GM10248 (cell line): ENCODE measurements at regions of chr11 and their contacts with region 1.

Region 1: GRCh38 chr11:120248551-120249278 is 8.8 kb downstream of the POU2F3 start:
- DNase-seq: no peak
- CTCF ChIP-seq: no peak

Region 2: DNA sequence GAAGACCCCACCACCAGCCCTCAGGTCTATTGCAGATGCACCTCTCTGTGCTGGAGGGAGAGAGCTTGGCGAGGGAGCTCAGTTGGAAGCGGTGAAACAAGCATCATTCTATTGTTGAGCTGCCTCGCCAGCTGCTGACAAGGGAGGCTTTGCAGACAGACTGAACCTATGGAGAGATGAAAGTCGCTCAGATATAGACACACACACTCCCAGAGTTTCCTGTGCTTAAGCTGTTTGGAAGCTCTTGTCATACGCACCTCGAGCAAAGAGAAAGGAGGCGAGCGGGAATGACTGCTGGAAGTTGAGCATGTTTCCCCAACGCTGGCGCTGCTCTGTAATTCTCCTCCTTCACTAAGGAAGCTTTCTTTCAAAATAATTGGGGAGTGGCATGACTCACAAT is 236.9 kb before region 1 on chr11:
- CTCF ChIA-PET with region 1: no interaction called
- POLR2A ChIA-PET with region 1: no interaction called
- DNase-seq: no peak
- CTCF ChIP-seq: no peak

Region 3: DNA sequence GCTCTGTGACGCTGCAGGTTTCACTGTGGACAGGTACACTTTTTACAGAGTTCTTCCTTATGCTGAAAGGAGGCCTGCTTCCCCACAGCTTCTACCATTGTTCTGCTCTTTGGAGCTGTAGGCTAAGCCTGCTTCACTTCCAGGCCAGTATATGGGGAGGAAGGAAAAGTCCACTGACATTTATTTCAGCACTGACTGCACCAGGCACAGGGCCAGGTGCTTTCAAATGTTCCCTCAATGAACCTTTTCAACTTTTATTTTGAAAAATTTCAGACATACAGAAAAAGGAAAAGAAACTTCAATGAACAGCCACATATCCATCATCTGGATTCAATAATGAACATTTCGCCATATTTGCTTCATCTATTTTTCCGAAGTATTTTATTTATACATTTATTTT is 13.2 kb after region 1 on chr11:
- CTCF ChIA-PET with region 1: interaction called, 10 read pairs
- POLR2A ChIA-PET with region 1: no interaction called
- DNase-seq: no peak
- CTCF ChIP-seq: no peak